ENCODE measurements at regions of chr15 and their contacts with region 1.

Region 1: DNA sequence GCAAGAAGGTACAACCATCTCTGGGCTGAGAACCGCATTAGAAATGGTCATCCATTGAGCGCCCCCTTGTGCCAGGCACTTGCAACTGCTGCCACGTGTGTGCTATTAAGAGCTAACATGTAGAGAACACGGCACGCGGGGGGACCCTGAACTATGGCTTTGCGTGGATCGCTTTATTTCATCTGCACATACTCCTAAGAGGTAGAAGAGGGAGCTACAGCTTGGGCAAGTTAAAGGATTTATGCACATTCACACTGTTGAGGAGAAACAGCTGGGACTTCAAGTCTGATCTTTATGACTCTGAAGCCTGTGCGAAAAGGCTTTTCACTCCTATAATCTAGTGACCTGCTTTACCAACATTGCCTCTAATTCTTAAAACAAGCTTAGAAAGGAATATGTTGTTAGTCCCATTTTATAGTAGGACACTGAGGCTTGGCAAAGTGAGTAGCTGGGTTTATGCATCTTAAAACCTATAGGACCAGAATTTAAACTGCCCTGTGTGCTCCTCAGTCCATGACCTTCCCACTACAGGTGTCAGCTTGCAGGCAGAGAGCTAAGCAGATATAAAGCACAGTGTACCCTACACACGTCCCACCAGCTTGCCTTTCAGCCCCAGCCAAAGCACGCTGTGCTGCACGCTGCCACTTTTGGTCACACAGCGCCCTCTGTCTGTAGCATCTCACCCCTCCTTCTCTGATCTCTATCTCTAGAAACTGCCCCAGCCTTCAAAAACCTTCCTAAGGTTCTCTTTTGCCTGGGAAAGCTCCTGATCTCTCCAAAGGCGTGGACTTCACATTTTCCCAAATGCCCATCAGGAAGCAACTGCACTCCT is 57.8 kb downstream of the STARD5 start:
- DNase-seq: peak; percentile 93
- H3K4me3 Mint-ChIP-seq: peak overlapping the region; percentile 65
- H3K27ac Mint-ChIP-seq: no peak overlapping the region
- H3K4me1 Mint-ChIP-seq: peaks cover 29% of the 10 kb centered on the region
- H3K27me3 Mint-ChIP-seq: no peaks in the 10 kb centered on the region

Region 2: GRCh38 chr15:80423215-80423614 is 842.9 kb before region 1 on chr15:
- CTCF ChIA-PET with region 1: no interaction called
- intact Hi-C with region 1: no loop called
- DNase-seq: no peak
- H3K4me3 Mint-ChIP-seq: no peak overlapping the region
- H3K27ac Mint-ChIP-seq: no peak overlapping the region
- H3K4me1 Mint-ChIP-seq: no peaks in the 10 kb centered on the region
- H3K27me3 Mint-ChIP-seq: peaks cover 13% of the 10 kb centered on the region

Region 3: GRCh38 chr15:80977627-80978036 is 288.5 kb before region 1 on chr15:
- CTCF ChIA-PET with region 1: interaction called, 19 read pairs
- intact Hi-C with region 1: loop called (anchors 1 kb)
- DNase-seq: peak; percentile 69
- H3K4me3 Mint-ChIP-seq: no peak overlapping the region
- H3K27ac Mint-ChIP-seq: peak overlapping the region; percentile 57
- H3K4me1 Mint-ChIP-seq: peaks cover 54% of the 10 kb centered on the region
- H3K27me3 Mint-ChIP-seq: no peaks in the 10 kb centered on the region

Region 4: DNA sequence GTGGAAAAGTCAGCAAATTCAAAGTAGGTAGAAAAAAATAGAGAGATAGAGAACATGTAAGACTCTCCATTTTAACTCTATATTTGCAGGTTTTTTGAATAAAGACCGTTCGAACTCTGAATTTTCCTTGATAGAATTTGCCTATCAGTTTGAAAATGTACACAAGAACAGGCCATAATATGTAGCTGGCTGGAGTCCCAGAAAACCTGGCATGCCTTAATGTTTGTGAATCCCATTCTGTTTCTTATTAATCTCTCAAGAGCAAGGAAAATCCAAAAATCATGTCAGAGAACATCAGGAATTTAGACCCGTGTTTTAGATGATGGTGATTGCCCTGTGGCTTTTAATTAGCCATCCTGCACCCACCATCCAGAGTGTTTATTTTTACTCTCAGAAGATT is 139.3 kb before region 1 on chr15:
- CTCF ChIA-PET with region 1: interaction called, 12 read pairs
- intact Hi-C with region 1: no loop called
- DNase-seq: no peak
- H3K4me3 Mint-ChIP-seq: no peak overlapping the region
- H3K27ac Mint-ChIP-seq: no peak overlapping the region
- H3K4me1 Mint-ChIP-seq: no peaks in the 10 kb centered on the region
- H3K27me3 Mint-ChIP-seq: peaks cover 38% of the 10 kb centered on the region

Region 5: DNA sequence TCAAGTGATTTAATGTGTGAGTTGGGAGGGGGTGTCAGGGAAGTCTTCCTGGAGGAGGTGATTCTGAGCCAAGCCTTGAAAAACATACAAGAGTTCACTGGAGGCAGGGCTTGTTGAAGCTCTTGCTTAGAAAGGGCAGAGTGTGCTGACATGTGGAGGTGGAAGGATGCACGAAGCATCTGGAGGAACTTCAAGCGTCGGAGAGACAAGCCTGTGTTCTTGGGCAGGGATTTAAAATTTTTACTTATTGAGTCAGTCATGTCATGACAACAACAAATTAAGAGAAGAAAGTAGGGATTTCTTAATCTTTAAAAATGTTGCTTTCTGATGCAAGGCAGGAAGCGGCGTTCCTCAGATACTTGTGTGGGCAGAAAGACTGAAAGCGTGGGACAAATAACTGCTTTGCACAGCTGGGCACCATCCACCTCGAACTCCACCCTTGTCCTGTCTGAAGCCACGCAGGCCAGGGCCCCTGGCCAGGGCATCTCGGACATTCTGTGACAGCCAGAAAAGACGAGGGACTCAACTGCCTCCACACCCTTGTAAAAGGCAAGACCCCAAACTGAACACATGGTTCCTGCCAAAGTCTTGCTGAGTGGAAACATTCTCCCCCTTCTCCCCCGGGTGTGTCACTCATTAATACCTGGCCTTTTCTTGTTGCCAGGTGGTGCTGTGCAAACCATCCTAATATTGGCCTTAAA is 76.4 kb before region 1 on chr15:
- CTCF ChIA-PET with region 1: interaction called, 11 read pairs
- intact Hi-C with region 1: no loop called
- DNase-seq: no peak
- H3K4me3 Mint-ChIP-seq: no peak overlapping the region
- H3K27ac Mint-ChIP-seq: no peak overlapping the region
- H3K4me1 Mint-ChIP-seq: no peaks in the 10 kb centered on the region
- H3K27me3 Mint-ChIP-seq: peaks cover 13% of the 10 kb centered on the region

Region 6: DNA sequence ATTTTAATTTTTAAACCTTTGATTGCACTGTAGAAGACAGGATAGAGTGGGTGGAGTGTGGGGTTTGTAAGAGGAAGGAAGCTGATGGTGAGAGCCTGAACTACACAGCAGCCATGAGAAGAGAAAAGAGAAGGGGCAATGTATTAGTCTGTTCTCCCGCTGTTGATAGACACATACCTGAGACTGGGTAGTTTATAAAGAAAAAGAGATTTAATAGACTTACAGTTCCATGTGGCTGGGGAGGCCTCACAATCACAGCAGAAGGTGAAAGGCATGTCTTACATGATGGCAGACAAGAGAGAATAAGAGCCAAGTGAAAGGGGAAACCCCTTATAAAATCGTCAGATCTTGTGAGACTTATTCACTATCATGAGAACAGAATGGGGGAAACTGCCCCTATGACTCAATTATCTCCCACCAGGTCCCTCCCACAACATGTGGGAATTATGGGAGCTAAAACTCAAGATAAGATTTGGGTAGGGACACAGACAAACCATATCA is 20.5 kb after region 1 on chr15:
- CTCF ChIA-PET with region 1: interaction called, 49 read pairs
- intact Hi-C with region 1: no loop called
- DNase-seq: peak; percentile 52
- H3K4me3 Mint-ChIP-seq: peak overlapping the region; percentile 75
- H3K27ac Mint-ChIP-seq: peak overlapping the region; percentile 95
- H3K4me1 Mint-ChIP-seq: peaks cover 83% of the 10 kb centered on the region
- H3K27me3 Mint-ChIP-seq: no peaks in the 10 kb centered on the region

Region 7: GRCh38 chr15:81357223-81357622 is 91.1 kb after region 1 on chr15:
- CTCF ChIA-PET with region 1: interaction called, 18 read pairs
- intact Hi-C with region 1: no loop called
- DNase-seq: no peak
- H3K4me3 Mint-ChIP-seq: no peak overlapping the region
- H3K27ac Mint-ChIP-seq: no peak overlapping the region
- H3K4me1 Mint-ChIP-seq: no peaks in the 10 kb centered on the region
- H3K27me3 Mint-ChIP-seq: no peaks in the 10 kb centered on the region

Region 8: DNA sequence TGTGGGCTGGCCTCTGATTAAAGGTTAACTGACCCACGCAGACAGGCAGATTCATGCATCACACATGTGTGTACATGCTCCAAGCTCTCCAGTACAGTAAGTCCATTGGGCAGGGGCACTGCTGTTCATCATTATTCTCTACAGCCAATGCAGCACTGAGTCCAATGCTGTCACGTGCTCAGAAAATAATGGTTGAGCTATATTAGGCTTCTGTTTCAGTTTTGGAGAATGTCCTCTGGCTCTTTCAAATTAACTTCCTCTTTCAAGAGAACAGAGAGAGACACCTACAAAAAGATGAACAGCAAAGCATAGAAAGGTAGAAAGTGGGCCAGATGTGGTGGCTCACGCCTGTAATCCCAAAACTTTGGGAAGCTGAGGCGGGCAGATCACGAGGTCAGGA is 577.1 kb after region 1 on chr15:
- CTCF ChIA-PET with region 1: no interaction called
- intact Hi-C with region 1: no loop called
- DNase-seq: no peak
- H3K4me3 Mint-ChIP-seq: no peak overlapping the region
- H3K27ac Mint-ChIP-seq: no peak overlapping the region
- H3K4me1 Mint-ChIP-seq: no peaks in the 10 kb centered on the region
- H3K27me3 Mint-ChIP-seq: no peaks in the 10 kb centered on the region

Measured in activated naive CD4-positive, alpha-beta T cell treated with anti-CD3 and anti-CD28 coated beads for 36 hours (primary cell).